HepG2 (cell line): ENCODE measurements at regions of chr14 and their contacts with region 1.

Region 1: DNA sequence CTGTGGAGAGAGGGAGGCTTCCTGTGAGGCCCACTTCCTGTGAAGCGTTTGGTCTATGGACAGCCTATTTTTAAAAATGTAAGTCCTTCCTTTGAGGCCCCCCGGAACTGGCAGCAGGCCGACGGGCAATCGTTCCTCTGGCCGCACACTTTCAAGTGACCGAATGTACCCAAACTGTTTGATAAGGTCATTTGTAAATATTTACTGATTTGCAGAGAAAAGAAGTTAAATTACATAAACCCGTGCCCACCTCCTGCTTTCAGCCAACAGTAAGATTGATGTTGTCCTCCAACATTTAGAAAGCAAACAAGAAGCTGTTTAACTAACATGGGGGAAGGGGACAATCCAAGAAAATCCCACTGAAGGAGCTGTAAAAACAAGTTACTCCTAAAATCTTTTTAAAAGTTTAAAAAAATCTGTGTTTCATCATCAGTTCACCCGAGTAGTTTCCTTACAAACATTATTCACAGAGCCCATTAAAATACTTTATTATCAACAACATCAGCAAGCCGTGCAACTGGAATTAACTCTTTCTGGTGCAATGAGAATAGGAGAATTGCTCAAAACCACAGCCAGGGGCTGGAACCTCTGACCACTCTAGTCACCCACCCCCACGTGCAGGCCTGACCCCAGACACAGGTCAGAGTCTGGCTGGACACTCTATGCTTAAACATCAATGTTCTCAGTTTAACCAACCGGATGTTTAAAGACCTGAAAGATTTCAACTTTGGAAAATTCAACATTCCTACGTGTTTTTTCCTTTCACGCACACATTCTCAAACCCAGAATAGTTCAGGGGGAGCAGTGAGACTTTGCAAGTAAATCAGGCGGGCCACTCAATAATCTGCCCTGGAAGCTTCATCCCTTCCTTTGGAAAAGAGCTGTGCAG is 65.3 kb downstream of the FOXN3 start:
- DNase-seq: peak; percentile 98
- ATAC-seq: peak; percentile 91
- H3K4me3 ChIP-seq: 0 out of 6 replicates have a peak overlapping the region, but pooled peaks of 1 of the 3 experiments have one; percentile 12
- H3K27ac ChIP-seq: peak overlapping the region; percentile 89
- H3K4me1 ChIP-seq: peaks cover 69% of the 10 kb centered on the region
- H3K27me3 ChIP-seq: no peaks in the 10 kb centered on the region
- CTCF ChIP-seq: no peak
- EP300 ChIP-seq: peak; percentile 82 to 98; a peak in 3 of 4 replicates
- POLR2A ChIP-seq: no peak
- RAD21 ChIP-seq: no peak

Region 2: DNA sequence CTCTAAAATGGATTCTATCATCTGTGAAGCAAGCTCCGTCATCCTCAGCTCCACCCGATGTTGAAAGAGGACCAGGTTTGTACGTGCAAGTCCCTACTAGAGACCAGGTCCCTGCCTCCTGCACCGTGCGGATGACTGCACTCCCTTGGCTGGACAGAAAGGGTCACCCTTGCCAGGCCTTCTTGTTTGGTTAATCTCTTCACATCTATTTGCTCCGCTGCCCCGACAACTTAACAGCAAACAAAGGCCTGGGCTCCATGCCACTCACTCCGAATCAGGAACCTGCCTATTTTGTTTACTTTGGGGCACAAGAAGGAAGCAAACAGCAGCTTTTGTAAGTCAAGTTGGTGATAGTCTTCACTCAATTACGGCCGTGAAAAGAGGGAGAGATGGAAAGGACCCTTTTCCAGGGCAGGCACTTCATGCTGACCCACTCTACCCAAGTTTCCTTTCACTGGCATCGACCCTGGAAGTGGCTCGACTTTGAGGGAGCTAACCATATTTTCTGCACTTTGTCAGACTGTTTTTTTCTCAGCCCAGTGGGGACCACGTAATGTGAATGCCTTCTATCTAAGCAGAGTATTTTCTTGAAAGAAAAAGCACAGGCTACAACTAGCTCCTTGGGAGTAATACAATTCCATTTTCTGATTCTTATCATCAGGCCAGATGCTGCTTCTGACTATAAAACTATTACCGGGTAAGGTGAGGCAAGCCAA is 137.4 kb before region 1 on chr14:
- CTCF ChIA-PET with region 1: no interaction called
- POLR2A ChIA-PET with region 1: no interaction called
- in situ Hi-C with region 1: no loop called
- intact Hi-C with region 1: loop called (anchors 10 kb)
- DNase-seq: peak; percentile 86
- ATAC-seq: peak; percentile 93
- H3K4me3 ChIP-seq: no peak overlapping the region
- H3K27ac ChIP-seq: peak overlapping the region; percentile 53
- H3K4me1 ChIP-seq: peaks cover 57% of the 10 kb centered on the region
- H3K27me3 ChIP-seq: no peaks in the 10 kb centered on the region
- CTCF ChIP-seq: peak; percentile 56
- EP300 ChIP-seq: peak in 1 of 2 experiments; percentile 33; a peak in 1 of 4 replicates
- POLR2A ChIP-seq: no peak
- RAD21 ChIP-seq: 0 out of 2 replicates have a peak, but pooled peaks have one; percentile 49

Region 3: GRCh38 chr14:89336338-89336737 is 15.4 kb before region 1 on chr14:
- CTCF ChIA-PET with region 1: no interaction called
- POLR2A ChIA-PET with region 1: interaction called, 28 read pairs
- in situ Hi-C with region 1: no loop called
- intact Hi-C with region 1: no loop called
- DNase-seq: peak; percentile 27
- ATAC-seq: peak; percentile 21
- H3K4me3 ChIP-seq: no peak overlapping the region
- H3K27ac ChIP-seq: no peak overlapping the region
- H3K4me1 ChIP-seq: peaks cover 72% of the 10 kb centered on the region
- H3K27me3 ChIP-seq: no peaks in the 10 kb centered on the region
- CTCF ChIP-seq: peak; percentile 25; the same call in 1 of the 2 replicates
- EP300 ChIP-seq: no peak
- POLR2A ChIP-seq: no peak
- RAD21 ChIP-seq: no peak

Region 4: DNA sequence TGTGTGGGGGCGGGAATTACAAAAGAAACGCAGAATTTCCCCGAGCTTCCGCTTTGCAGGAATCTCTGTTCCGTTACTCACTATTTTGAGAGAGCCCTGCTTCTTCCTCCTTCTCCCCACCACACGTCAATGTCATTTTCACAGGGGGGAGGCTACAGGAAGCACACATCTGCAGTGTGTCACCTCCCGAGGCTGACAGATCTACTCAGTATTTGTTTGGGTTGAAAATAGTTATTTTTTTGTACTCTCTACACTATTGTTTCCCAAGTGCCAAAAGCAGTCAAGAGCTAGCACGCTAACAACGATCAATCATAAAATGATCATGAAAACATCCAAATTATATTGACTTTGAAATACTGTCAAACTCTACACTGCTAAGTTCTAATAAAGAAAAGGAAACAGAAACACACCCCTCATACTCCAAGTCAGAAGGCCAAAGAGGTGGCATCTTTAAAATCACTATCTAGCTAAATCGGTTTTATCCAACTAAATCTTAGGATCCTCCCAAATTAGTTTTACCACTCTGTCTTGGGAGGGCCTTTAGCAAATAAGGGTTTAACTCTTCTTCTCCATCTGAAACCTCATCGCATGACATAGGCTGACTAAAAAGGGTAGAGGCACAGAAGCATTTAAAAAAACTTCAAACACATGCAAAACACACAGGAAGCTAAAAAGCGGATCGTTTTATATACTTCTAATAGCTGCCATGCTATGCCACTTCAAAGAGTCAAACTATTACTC is 13.5 kb after region 1 on chr14:
- CTCF ChIA-PET with region 1: no interaction called
- POLR2A ChIA-PET with region 1: interaction called, 57 read pairs
- in situ Hi-C with region 1: no loop called
- intact Hi-C with region 1: loop called (anchors 1 kb)
- DNase-seq: no peak
- ATAC-seq: no peak
- H3K4me3 ChIP-seq: no peak overlapping the region
- H3K27ac ChIP-seq: no peak overlapping the region
- H3K4me1 ChIP-seq: peaks cover 66% of the 10 kb centered on the region
- H3K27me3 ChIP-seq: no peaks in the 10 kb centered on the region
- CTCF ChIP-seq: no peak
- EP300 ChIP-seq: no peak
- POLR2A ChIP-seq: no peak
- RAD21 ChIP-seq: no peak

Region 5: DNA sequence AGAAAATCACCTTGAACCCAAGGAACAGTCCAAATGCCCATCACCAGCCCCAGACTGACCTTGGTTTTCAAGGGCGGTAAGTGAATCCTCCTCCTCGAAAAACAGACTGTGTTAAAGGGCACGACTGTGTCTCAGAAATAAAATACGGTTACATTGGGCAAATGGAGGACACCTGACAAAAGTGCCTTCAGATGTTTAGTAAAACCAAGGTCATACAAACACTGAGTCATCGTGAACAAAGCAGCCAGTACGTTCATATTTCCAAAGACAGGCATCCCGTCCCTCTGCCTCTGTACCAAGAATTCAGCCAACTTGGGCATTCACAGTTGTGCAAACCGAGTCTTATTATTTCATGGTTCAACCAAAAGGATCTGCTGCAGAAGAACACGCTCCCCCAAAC is 39.4 kb after region 1 on chr14:
- CTCF ChIA-PET with region 1: no interaction called
- POLR2A ChIA-PET with region 1: interaction called, 5 read pairs
- in situ Hi-C with region 1: no loop called
- intact Hi-C with region 1: loop called (anchors 2 kb)
- DNase-seq: peak; percentile 92
- ATAC-seq: peak; percentile 84
- H3K4me3 ChIP-seq: peak overlapping the region in 2 of 3 experiments; percentile 37 to 41; a peak in 3 of 6 replicates
- H3K27ac ChIP-seq: peak overlapping the region; percentile 87
- H3K4me1 ChIP-seq: peaks cover 99% of the 10 kb centered on the region
- H3K27me3 ChIP-seq: no peaks in the 10 kb centered on the region
- CTCF ChIP-seq: no peak
- EP300 ChIP-seq: peak; percentile 36 to 93; a peak in 2 of 4 replicates
- POLR2A ChIP-seq: no peak
- RAD21 ChIP-seq: no peak

Region 6: GRCh38 chr14:89452281-89452680 is 100.5 kb after region 1 on chr14:
- CTCF ChIA-PET with region 1: no interaction called
- POLR2A ChIA-PET with region 1: no interaction called
- in situ Hi-C with region 1: no loop called
- intact Hi-C with region 1: no loop called
- DNase-seq: no peak
- ATAC-seq: no peak
- H3K4me3 ChIP-seq: no peak overlapping the region
- H3K27ac ChIP-seq: no peak overlapping the region
- H3K4me1 ChIP-seq: peaks cover 13% of the 10 kb centered on the region
- H3K27me3 ChIP-seq: no peaks in the 10 kb centered on the region
- CTCF ChIP-seq: no peak
- EP300 ChIP-seq: no peak
- POLR2A ChIP-seq: no peak
- RAD21 ChIP-seq: no peak